Astrocyte of the cerebellum (primary cell): ENCODE measurements at regions of chr12 and their contacts with region 1.

Region 1: DNA sequence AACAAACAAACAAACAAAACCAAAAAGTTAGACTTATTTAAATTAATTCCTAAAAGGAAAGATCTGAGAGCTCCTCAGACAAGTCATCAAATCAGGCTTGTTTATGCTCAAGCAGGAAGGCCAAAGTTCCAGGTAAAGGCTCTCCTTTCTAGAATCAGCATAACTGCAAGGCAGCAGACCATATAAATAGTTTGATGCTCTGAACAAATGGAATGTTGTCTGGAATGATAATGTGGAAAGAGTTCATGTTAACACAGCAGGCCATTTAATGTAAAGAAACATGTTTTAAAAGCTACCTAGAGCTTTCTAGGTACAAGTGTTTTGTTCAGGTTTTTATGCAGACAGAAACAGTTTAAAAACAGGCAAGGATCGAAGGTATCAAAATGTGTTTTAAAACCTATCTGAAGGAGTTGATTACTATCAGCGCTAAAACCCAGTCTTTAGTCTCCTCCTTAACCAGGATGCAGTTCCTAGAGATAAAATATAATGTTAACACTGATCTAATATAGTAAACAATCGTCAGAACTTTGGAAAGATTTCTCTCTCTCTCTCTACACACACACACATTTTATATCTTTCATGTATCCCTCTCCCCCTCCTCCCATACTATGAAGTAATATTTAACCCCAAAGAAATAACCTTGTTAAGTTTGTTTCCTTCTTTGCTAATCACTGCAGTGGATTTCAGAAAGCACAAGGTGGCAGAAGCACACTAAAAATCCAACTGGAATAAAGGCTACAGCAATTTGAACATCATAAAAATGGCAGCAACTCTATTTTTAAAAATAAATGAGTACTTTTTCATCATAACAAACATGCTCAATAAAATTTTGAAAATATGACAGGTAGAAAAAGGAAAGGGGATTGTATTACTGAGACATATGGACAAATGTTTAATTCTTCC is 135.5 kb downstream of the PAWR start:
- DNase-seq: peak; percentile 63
- H3K4me3 ChIP-seq: no peak overlapping the region
- CTCF ChIP-seq: peak; percentile 65

Region 2: DNA sequence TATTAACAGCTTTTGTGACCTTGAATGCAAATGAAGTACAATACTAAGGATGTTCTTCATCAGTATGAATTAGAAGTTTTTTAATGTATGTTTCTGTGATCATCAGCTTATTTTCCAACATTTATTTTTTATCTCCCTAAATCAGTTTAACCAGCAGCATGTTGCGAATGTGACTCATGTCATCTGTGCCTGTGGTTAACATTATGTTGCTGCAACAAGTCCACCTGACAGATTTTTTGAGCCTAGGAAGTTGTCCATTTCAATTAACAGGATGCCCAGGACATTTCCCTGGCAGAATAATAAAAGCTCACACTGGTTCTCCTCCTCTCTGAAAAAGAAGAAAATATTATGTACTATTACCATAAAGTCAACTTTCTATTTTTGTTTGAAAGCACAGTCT is 535.2 kb before region 1 on chr12:
- in situ Hi-C with region 1: no loop called
- DNase-seq: no peak
- H3K4me3 ChIP-seq: no peak overlapping the region
- CTCF ChIP-seq: no peak

Region 3: GRCh38 chr12:79597910-79598309 is 42.6 kb after region 1 on chr12:
- in situ Hi-C with region 1: no loop called
- DNase-seq: no peak
- H3K4me3 ChIP-seq: no peak overlapping the region
- CTCF ChIP-seq: no peak

Region 4: DNA sequence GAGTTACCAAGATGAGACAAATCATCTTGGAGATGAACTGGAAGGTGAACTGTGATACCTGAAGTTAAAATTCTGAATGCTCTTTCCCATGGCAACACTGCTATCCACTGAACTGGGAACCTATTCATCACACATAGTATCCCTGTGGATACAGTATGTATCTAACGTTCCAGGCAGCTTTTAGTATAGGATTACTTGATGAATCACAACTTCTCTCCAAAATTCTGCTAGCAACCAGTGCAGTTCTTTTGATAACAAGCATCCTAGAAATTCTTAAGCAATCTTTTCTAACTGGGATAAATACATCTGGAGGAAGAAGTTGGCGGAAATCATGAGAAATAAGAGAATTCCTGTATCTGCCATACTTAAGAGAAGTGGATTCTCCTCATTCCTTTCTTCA is 69.1 kb after region 1 on chr12:
- in situ Hi-C with region 1: no loop called
- DNase-seq: no peak
- H3K4me3 ChIP-seq: no peak overlapping the region
- CTCF ChIP-seq: no peak

Region 5: GRCh38 chr12:79681008-79681590 is 125.8 kb after region 1 on chr12:
- in situ Hi-C with region 1: no loop called
- DNase-seq: no peak
- H3K4me3 ChIP-seq: no peak overlapping the region
- CTCF ChIP-seq: no peak

Region 6: GRCh38 chr12:80186727-80187217 is 631.5 kb after region 1 on chr12:
- in situ Hi-C with region 1: loop called (anchors 25 kb)
- DNase-seq: peak; percentile 94
- H3K4me3 ChIP-seq: no peak overlapping the region
- CTCF ChIP-seq: peak; percentile 81